ENCODE measurements at regions of chr17 and their contacts with region 1.

Region 1: DNA sequence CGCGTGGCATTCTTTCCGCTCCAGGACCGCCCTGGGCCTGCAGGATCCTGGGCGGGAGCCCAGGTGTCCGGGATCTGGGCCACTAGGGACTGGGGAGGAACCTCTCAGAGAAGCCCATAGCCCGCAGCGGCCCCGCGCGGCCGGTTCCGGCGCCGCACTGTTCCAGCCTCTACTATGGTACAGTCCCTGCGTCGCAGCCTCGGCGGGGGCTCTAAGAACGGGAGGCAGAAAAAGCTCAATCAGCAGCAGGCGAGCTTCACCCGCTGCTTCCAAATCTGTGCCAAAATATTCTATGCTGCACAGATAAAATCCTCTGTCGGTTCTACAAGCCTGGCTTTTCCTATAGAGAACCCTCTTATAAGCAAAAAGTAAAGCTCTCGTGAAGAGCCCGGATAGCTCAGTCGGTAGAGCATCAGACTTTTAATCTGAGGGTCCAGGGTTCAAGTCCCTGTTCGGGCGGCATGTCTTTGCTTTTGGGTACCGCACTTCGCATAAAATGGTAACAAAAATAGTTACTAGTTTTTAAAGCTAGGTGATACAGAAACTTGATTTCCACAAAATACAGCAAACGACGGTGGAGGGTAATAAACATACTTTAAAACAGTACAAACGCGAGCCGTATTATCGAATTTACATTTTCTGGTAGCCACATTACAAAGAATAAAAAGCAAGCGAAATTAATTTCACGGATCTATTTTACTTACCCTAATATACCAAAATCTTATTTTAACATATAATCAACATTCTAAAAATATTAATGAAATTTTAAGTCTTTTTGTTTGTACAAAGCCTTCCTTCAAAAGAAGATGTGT is 661 bp upstream of the ALOXE3 start:
- DNase-seq: peak; percentile 90
- H3K4me3 ChIP-seq: peak overlapping the region; percentile 45
- H3K27ac ChIP-seq: peak overlapping the region; percentile 56
- H3K4me1 ChIP-seq: peaks cover 39% of the 10 kb centered on the region
- H3K27me3 ChIP-seq: peaks cover 52% of the 10 kb centered on the region
- CTCF ChIP-seq: peak; percentile 91

Region 2: DNA sequence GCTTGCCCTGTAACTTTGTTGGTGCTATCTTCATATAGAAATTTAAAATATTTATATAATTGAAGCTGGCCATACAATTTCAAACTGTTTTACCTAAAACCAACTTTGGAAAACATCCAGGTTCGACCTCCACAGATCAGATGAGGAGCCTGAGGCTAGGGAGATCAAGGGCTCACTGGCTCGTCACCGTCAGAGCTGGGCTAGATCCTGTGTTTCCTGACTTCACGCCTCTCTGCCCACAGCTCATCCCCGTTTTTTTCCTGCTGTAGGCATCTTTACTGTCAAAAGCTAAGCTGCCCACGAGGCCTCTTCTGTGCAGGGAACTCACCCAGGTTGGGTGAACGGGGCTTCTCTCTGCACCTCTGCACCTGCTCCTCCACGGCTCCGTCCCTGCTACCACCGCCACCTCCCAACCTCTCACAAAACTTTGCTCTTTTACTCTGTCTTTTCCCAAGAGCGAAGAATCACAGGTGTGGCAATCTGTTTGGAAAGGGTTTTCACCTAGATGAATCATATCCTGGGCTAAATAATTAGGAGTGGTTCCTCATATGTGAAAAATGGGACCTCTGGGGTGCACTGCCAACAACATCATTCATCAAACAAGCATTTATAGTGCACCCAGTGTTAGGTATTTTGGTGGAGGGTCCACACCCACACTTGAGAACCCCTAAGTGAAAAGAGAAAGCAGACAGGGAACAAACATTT is 309.7 kb before region 1 on chr17:
- intact Hi-C with region 1: no loop called
- DNase-seq: no peak
- H3K4me3 ChIP-seq: no peak overlapping the region
- H3K27ac ChIP-seq: no peak overlapping the region
- H3K4me1 ChIP-seq: no peaks in the 10 kb centered on the region
- H3K27me3 ChIP-seq: no peaks in the 10 kb centered on the region
- CTCF ChIP-seq: no peak

Region 3: DNA sequence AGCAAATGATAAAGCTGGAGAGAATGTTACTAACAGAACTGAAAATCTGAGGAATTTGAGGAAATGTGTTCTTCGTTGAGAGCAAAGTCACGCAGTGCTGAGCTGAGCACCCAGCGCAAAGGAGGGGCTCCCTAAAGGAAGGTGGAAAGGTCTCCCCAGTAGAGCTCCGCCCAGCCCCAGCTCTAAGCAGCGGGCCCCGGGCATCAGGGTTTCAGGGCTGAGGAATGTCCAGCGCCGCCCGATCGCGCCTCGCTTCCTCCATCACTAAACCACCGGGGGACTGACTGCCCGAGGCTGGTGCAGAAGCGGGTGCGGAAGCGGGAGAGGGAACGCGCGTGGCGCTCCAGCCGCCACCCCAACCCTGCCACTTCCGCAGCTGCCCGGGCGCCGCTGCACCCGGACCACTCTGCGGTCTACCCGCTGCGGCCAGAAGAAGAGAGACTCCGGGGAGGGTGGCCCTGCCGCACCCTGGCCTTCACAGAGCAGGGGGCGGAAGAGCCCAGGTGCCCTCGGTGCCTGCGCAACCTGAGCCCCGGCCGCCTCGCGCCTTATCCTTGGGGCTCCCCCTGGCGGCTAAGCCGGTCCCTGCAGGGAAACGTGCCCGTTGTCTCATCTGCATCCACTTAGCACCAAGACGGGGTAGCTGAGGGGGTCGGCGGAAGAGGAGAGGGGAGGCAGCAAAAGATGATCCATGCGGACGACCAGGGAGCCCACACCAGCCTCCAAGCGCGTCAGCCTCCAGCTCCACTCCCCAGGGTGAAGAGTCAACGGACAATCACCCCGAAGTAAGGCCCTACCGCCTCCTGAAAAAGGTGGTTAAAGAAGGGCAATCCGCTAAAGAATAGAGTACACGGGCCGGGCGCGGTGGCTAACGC is 129.0 kb before region 1 on chr17:
- intact Hi-C with region 1: no loop called
- DNase-seq: peak; percentile 94
- H3K4me3 ChIP-seq: peak overlapping the region; percentile 71
- H3K27ac ChIP-seq: peak overlapping the region; percentile 52
- H3K4me1 ChIP-seq: no peaks in the 10 kb centered on the region
- H3K27me3 ChIP-seq: no peaks in the 10 kb centered on the region
- CTCF ChIP-seq: peak; percentile 94

Region 4: DNA sequence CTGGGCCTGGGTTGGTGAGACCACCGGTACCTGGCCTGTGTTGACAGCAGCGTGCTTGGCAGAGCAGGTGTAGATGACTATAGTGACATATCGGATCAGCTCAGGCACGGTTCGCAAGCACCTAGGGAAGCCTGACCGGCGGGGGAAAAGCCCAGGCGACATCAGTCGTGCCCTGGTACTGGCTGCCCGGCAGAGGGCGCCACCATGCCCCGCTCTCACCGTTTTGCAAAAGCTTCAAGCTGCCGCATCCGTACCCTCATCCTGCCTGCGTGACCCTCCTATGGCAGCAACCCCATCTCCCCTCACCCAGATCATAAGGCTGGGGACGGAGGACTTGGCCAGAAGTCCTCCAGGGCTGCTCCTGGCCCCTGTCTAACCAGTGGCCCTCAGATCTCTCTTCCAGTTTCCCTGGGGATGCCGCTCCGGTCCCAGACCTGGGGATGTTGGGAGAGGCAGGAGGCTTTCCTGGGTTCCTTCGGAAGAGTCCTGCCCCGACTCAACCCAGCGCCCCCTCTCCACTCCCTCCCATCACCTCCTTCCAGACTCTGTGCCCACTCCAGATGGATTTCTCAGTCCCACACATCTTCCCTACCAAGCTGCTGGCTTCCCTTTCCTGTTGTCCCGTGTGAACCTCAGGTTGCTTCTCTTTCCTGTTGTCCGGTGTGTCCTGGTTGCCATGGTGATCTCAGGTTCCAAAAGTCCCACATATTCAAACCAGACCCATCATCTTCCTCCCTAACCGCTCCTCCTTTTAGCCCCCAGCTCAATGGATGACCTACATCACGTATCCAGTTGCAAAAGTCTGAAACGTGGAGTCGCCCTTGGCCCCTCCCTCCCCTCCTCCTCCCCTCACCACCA is 45.1 kb before region 1 on chr17:
- intact Hi-C with region 1: loop called (anchors 5 kb)
- DNase-seq: peak; percentile 78
- H3K4me3 ChIP-seq: no peak overlapping the region
- H3K27ac ChIP-seq: no peak overlapping the region
- H3K4me1 ChIP-seq: peaks cover 15% of the 10 kb centered on the region
- H3K27me3 ChIP-seq: peaks cover 18% of the 10 kb centered on the region
- CTCF ChIP-seq: peak; percentile 92

Region 5: GRCh38 chr17:8186787-8187516 is 68.0 kb after region 1 on chr17:
- intact Hi-C with region 1: loop called (anchors 2 kb)
- DNase-seq: peak; percentile 94
- H3K4me3 ChIP-seq: peak overlapping the region; percentile 75
- H3K27ac ChIP-seq: peak overlapping the region; percentile 96
- H3K4me1 ChIP-seq: no peaks in the 10 kb centered on the region
- H3K27me3 ChIP-seq: no peaks in the 10 kb centered on the region
- CTCF ChIP-seq: no peak